Transverse colon (tissue), 4 donors: ENCODE measurements at regions of chr11 and their contacts with region 1.

Region 1: DNA sequence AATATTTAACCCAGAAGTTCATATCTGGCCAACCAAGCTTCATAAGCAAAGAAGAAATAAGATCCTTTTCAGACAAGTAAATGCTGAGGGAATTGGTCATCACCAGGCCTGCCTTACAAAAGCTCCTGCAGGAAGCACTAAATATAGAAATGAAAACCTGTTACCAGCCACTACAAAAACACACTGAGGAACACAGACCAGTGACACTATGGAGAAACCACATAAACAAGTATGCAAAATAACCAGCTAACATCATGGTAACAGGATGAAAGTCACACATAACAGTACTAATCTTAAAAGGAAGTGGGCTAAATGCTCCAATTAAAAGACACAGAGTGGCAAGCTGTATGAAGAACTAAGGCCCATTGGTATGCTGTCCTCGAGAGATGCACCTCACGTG is 311.4 kb downstream of the DYNC2H1 start:
- DNase-seq: no peak
- H3K4me3 ChIP-seq: no peak overlapping the region
- H3K27ac ChIP-seq: no peak overlapping the region
- H3K4me1 ChIP-seq: no peaks in the 10 kb centered on the region
- H3K27me3 ChIP-seq: no peaks in the 10 kb centered on the region
- CTCF ChIP-seq: no peak
- EP300 ChIP-seq: no peak
- POLR2A ChIP-seq: no peak

Region 2: DNA sequence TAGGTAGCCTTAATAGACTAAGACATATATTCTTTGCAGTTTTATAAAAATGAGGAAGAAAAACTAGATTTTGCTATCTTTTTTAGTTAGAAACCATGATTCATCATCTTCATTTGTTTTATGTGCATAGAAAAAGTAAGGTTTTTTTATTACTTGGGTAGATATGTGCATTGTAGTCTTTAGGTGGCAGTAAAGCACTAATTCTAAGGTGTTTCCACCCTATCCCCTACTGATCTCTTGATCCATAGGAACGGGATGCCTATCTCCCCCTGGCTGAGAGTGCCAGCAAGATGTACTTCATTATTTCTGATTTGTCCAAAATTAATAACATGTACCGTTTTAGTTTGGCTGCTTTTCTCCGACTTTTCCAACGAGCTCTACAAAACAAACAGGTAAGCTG is 163.2 kb before region 1 on chr11:
- in situ Hi-C with region 1: no loop called
- intact Hi-C with region 1: no loop called
- DNase-seq: no peak
- H3K4me3 ChIP-seq: no peak overlapping the region
- H3K27ac ChIP-seq: no peak overlapping the region
- H3K4me1 ChIP-seq: no peaks in the 10 kb centered on the region
- H3K27me3 ChIP-seq: no peaks in the 10 kb centered on the region
- CTCF ChIP-seq: no peak
- EP300 ChIP-seq: no peak
- POLR2A ChIP-seq: no peak

Region 3: DNA sequence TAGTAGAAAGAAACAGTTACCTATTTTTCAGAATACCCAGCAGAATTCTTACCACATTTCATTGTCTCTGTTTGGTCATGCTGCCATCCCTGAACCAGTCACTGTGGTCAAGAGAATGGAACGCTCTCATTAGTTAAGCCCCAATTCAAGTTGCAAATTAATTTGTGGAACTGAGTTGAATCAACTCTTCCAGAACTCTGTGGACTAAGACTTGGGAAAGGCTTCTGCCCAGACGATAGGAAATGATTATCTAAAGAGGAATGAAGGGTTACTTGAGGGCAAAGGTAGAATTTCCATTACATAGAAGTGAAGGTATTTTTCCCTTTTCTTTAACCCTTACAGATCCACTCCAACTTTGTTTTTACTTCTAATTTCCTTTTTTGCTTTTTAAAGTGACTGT is 25.0 kb before region 1 on chr11:
- in situ Hi-C with region 1: no loop called
- intact Hi-C with region 1: loop called (anchors 1 kb)
- DNase-seq: no peak
- H3K4me3 ChIP-seq: no peak overlapping the region
- H3K27ac ChIP-seq: no peak overlapping the region
- H3K4me1 ChIP-seq: no peaks in the 10 kb centered on the region
- H3K27me3 ChIP-seq: no peaks in the 10 kb centered on the region
- CTCF ChIP-seq: no peak
- EP300 ChIP-seq: no peak
- POLR2A ChIP-seq: no peak

Region 4: DNA sequence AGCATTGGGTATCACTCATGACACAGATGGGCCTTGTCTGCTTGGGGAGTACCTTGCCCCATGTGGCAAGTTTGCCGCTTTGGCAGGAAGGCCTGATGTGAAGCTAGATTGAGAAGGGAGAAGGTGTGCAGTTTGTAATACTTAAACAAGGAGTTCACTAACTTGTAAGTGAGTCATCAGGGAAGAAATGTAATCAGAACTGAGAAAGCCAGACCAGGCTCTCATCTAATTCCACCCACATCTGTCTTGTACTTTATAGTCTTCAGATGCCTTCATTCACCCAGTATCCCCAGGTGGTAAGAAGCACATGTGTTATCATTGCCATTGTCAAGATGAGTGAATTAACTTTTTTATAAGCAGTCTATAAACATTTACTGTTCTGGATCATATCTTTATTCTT is 499.9 kb after region 1 on chr11:
- in situ Hi-C with region 1: no loop called
- intact Hi-C with region 1: no loop called
- DNase-seq: no peak
- H3K4me3 ChIP-seq: no peak overlapping the region
- H3K27ac ChIP-seq: no peak overlapping the region
- H3K4me1 ChIP-seq: no peaks in the 10 kb centered on the region
- H3K27me3 ChIP-seq: no peaks in the 10 kb centered on the region
- CTCF ChIP-seq: no peak
- EP300 ChIP-seq: no peak
- POLR2A ChIP-seq: no peak